ENCODE measurements at regions of chr1 and their contacts with region 1.

Region 1: DNA sequence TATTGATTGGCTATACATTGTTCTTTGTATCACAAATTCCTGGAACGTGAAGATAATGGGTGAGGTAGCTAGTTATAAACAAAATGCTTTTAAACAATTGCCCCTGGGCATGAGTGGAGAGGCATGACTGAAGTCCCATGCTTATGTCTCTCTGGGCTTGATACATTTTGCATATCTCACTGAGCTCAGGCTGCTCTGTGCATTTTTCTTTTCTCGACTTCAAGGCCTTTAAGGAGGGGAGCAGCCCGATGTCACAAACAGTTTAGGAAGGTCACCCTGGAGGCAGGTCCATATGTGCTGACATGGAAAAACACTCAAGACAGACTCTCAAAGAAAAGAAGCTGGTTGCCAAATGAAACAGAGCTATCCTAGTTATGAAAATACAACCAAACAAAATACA is 80.1 kb upstream of the PUM1 start:
- DNase-seq: no peak
- H3K4me3 Mint-ChIP-seq: no peak overlapping the region
- H3K27ac Mint-ChIP-seq: no peak overlapping the region
- H3K4me1 Mint-ChIP-seq: no peaks in the 10 kb centered on the region
- H3K27me3 Mint-ChIP-seq: peaks cover 4% of the 10 kb centered on the region

Region 2: DNA sequence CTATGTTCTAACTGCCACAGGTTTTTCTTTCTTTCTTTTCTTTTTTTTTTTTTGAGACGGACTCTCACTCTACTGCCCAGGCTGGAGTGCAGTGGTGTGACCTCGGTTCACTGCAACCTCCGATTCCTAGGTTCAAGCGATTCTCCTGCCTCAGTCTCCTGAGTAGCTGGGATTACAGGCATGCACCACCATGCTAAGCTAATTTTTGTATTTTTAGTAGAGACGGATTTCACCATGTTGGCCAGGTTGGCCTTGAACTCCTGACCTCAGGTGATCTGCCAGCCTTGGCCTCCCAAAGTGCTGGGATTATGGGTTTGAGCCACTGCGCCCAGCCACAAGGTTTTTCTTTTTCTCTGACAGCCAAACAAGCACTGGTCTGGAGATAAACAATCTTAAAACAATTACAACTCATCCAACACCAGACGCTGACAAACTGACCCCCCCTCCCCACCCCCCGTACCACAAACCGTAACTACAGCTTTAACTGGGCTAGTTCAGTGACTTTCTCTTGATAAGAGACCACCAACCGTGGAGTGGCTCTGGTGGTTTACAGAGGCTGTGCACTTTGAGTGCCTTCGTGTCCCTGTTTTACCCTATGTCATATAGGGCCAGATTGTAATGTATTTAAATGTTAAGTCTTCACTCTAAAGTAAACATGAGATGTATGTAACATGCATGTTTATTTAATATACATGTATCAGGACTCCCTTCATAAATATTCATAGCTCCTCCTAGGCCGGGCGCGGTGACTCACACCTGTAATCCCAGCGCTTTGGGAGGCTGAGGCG is 60.7 kb before region 1 on chr1:
- intact Hi-C with region 1: loop called (anchors 10 kb)
- DNase-seq: no peak
- H3K4me3 Mint-ChIP-seq: no peak overlapping the region
- H3K27ac Mint-ChIP-seq: no peak overlapping the region
- H3K4me1 Mint-ChIP-seq: no peaks in the 10 kb centered on the region
- H3K27me3 Mint-ChIP-seq: no peaks in the 10 kb centered on the region

Region 3: DNA sequence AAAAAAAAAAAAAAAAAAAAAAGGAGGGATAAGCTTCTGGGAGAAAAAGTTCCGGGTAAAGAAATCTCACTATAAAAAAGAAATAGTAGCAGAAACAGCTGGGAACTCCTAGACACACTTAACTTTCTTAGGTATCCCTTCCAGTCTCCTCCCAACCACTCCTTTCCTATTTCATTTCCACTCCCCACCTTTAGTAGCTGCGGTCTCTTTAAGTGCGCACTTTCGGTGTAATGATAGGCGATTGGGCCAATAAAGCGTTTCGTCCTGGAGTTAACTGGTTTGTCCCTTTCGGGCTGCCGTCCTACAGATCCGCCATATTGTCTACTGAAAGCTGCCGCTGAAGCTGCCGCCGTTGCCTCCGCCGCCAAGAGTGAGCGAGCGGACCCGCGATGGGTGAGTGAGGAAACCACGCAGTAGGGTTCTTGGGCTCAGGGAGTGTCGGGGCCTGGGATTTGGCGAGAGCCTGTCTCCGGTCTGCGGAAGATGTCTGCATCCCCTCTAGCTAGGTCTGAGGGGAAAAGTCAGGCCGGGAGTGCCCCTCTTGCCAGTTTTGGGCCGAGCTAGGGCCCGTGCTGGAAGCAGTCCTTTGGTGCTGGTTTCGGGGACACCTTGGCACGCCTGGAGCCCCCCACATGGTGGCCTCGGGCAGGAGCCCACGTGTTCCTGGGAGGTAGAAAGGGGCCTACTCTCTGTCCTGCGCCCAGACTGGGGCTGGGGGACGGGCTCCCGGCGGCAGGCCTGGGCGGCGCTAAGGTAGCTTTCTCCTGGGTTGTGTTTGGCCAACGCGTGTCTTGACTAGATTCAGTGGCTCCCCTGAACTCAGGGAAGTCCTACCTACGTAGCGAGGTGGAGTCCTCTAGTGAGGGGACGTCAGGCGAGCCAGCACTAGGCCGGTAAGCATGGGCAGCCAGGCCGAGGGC is 962.4 kb after region 1 on chr1 and contains the start of gene KPNA6:
- intact Hi-C with region 1: no loop called
- DNase-seq: peak; percentile 89
- H3K4me3 Mint-ChIP-seq: peak within 1 kb of the TSS; percentile 98
- H3K27ac Mint-ChIP-seq: peak within 1 kb of the TSS; percentile 94
- H3K4me1 Mint-ChIP-seq: peaks cover 43% of the 10 kb centered on the region
- H3K27me3 Mint-ChIP-seq: no peaks in the 10 kb centered on the region
- total RNA-seq, gene KPNA6: 76.7 and 78.6 TPM in 2 replicates

Measured in activated T-helper 1 cell treated with anti-CD3 and anti-CD28 coated beads, Interleukin-12 subunit alpha, Interleukin-12 subunit beta, Interleukin-2, Interleukin-4 antibody, amounts not matched to agents 30 ng/mL and 10 ng/mL and 1 ng/mL, durations not matched to agents 14 hours and 24 hours and 36 hours (primary cell).